ENCODE measurements at regions of chr18 and their contacts with region 1.

Region 1: GRCh38 chr18:21820035-21820810 is 79.6 kb downstream of the MIB1 start:
- DNase-seq: no peak
- ATAC-seq: no peak
- H3K4me3 Mint-ChIP-seq: no peak overlapping the region
- H3K27ac Mint-ChIP-seq: no peak overlapping the region
- H3K4me1 Mint-ChIP-seq: peaks cover 8% of the 10 kb centered on the region
- H3K27me3 Mint-ChIP-seq: no peaks in the 10 kb centered on the region
- CTCF ChIP-seq: no peak

Region 2: DNA sequence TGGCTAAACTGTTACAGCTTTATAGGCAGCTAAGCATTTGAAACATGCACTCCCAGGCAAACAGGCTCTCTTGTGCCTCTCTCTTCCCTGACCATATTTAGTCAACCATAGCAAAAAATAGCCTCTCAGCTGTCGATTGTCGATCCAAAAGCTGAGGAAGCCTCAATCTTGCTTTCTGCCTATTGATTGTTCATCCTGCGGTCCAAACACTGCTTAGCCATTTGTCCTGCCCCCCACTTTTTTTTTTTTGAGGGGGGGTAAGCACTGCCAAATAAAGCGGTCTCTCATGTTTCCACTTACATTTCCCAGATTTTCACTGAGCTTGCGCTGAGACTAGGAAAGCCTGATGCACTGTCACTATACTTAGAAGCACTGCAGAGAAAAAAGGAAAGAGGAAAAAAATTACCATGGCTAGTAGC is 11.2 kb after region 1 on chr18:
- CTCF ChIA-PET with region 1: interaction called, 29 read pairs
- POLR2A ChIA-PET with region 1: no interaction called
- DNase-seq: no peak
- ATAC-seq: no peak; the same call in 1 of the 2 replicates
- H3K4me3 Mint-ChIP-seq: no peak overlapping the region
- H3K27ac Mint-ChIP-seq: no peak overlapping the region
- H3K4me1 Mint-ChIP-seq: peaks cover 13% of the 10 kb centered on the region
- H3K27me3 Mint-ChIP-seq: no peaks in the 10 kb centered on the region
- CTCF ChIP-seq: no peak

Measured in WTC11 (cell line).